Cardiac septum (tissue), 1 donor: ENCODE measurements at regions of chr2 and their contacts with region 1.

Region 1: DNA sequence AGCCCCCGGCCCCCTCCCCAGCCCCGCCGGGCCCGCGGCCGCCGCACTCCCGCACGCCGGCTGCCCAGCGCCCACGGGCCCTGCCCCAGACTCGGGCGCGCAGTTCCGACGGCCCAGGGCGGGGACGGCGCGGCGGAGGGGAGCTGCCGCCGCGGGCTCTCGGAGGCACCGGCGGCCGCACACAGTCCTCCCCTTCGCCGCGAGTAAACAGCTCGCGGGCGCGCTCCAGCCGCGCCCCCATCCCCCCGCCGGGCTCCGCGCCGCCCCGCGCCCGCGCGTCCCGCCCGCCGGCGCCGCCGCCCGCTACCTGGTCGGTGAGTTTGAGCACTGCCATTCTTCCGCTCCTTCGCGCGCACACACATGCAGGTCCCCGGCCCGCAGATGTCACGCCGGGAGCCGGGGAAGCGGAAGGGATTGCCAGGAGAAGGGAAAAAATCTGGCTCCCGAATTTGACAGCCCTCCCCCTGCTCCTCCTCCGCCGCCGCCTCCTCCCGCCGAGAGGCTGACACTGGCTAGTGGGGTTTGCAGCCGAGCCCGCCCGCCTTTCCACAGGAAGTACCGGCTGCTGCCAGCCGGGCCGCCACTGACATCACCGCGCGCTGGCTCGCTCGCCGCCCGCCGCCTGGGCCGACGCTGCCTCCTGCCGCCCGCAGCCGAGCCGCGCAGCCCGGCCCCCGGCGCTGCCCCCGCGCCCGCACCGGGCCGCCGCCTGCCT is at the start of gene ANKRD44:
- DNase-seq: peak; percentile 95
- total RNA-seq, gene ANKRD44: 6.4 TPM

Region 2: DNA sequence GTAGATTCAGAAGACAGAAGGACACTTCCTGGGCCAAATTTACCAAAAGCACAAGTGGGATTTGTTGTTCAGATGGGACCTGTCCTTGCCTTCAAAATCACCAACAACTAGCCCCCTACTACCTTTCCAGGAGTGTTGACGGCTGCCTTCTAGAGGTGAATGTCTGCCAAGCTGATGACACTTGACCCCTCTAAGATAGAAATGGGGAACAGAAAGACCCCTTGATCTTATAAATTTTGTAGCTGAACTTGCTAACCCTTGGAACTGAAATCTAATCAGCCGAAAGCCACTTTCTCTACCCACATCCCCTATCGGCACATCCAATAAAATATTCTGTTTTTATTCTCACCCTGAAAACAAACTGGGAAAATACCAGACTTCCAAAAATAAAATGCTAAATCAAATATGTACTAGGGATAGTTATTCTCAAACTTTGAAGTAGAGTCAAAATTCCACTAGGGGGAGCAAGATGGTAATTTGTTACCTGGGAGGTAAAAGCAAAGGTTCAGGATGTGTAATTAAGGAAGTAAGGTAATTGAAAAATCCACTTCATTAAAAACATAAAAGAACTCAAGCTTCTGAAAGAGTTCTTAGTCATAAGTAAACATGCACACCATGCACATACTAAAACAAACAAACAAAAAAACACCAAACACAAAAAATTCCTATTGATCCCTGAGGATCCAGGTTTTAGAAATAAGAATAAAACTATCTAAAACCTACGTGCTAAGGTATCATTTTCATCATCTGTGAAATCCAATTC is 119.1 kb before region 1 on chr2:
- intact Hi-C with region 1: loop called (anchors 2 kb)
- DNase-seq: no peak

Region 3: GRCh38 chr2:197472166-197472565 is 161.7 kb after region 1 on chr2:
- intact Hi-C with region 1: no loop called
- DNase-seq: no peak